HAP-1 (cell line): ENCODE measurements at regions of chr20 and their contacts with region 1.

Region 1: DNA sequence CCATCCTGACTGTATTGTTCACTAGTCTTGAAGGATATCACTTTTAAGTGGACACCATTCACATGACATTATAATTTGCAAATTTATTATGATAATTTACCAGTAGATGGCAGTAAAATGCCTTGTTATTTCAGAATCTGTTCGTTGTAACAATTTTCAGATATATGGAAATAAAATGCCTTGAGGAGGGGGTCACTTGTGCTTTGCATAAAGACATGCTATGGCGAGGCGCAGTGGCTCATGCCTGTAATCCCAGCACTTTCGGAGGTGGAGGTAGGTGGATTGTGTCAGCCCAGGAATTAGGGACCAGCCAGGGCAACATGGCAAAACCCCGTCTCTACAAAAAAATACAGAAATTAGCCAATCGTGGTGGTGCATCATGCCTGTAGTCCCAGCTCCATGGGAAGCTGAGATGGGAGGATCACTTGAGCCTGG is 9.0 kb upstream of the NCOA6 start:
- DNase-seq: peak in 1 of 2 experiments; percentile 74
- H3K4me3 ChIP-seq: no peak overlapping the region
- H3K4me1 ChIP-seq: peaks cover 7% of the 10 kb centered on the region
- H3K27me3 ChIP-seq: peaks cover 3% of the 10 kb centered on the region

Region 2: DNA sequence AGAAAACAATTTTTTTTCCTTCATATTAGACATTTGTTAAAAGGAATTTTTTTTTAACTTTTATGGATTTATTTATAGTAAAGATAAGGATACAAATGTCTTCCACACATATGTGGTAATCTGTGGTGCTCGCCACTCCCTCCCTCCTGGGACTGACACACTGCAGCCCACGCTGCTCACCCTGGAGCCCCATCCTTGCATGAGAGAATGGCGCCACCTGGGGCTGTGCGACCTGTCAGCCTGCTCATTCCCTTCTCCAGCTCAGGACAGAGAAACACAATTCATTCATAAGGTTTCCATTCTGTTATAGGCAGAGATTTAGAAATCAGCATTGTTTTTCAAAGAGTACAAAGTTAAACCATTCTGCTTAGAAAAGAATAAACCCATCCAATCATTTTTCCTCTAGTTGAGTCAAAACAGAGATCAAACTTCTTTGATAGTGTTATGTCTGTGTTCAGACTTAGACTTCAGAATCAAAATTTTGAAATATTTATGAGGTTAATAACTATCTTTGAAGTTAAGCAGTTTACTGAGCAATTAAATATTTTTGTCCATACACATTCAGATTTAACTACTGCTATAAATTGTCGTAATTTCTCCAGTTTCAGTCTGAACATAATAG is 361.1 kb before region 1 on chr20:
- in situ Hi-C with region 1: no loop called
- DNase-seq: peak in 1 of 2 experiments; percentile 69
- H3K4me3 ChIP-seq: no peak overlapping the region
- H3K4me1 ChIP-seq: no peaks in the 10 kb centered on the region
- H3K27me3 ChIP-seq: no peaks in the 10 kb centered on the region

Region 3: DNA sequence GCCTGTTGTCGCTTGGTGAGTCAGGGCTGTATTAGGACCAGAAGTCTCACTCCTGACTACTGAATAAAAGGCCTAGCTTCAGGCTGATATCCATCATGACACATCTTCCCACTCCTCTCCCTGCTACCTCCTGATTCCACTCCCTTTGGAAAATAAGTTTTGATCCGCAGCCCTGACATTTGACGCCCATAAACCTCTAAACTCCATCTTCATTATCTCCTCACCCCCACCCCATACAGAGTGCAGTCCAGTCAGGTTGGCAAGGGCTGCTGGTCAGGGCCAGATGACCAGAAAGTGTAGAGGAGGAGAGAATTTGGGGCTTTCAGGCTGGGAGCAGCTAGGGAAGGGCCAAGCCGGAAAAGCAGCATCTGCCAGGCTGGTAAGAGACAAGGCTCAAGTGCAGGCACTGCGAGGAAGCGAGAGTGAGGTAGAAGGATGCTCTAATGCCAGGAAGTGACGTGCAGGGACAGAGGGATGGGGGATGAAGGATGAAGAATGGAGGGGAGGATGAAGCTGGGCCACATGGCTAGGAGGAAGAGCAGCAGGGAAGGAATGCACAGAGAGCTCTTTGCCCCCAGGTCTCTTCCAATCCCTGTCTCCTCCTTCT is 36.9 kb after region 1 on chr20:
- in situ Hi-C with region 1: no loop called
- DNase-seq: no peak
- H3K4me3 ChIP-seq: peak overlapping the region; percentile 48
- H3K4me1 ChIP-seq: peaks cover 16% of the 10 kb centered on the region
- H3K27me3 ChIP-seq: no peaks in the 10 kb centered on the region

Region 4: GRCh38 chr20:35207950-35208611 is 373.6 kb after region 1 on chr20:
- in situ Hi-C with region 1: loop called (anchors 10 kb)
- DNase-seq: peak; percentile 66 to 92
- H3K4me3 ChIP-seq: no peak overlapping the region
- H3K4me1 ChIP-seq: no peaks in the 10 kb centered on the region
- H3K27me3 ChIP-seq: no peaks in the 10 kb centered on the region

Region 5: DNA sequence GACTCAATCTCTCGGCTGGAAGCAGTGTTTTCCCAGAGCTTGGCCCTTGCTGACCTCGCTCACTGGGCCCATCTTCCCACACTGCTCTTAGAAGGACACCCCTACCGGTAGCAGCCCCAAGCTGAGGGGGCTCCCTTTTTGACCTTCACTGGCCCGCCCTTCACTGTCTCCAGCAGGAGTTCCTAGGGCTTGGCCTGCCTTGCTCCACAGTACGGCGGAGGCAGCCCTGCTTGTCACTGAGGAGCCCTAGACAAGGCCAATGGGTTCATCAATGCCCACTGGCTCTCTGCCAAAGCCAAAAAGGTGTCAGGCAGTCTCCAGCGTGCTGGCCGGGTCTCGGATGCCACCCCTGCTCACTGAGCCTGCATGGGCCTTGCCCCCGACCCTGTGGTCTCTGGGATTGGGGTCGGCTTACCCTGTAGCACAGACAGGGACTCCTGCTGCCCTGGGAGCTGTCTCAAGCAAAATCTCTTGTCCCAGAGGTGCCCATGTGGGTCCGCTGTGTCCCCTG is 441.3 kb after region 1 on chr20:
- in situ Hi-C with region 1: no loop called
- DNase-seq: no peak
- H3K4me3 ChIP-seq: no peak overlapping the region
- H3K4me1 ChIP-seq: peaks cover 7% of the 10 kb centered on the region; the same call in 1 of the 2 replicates
- H3K27me3 ChIP-seq: no peaks in the 10 kb centered on the region